K562 (cell line): ENCODE measurements at regions of chr22 and their contacts with region 1.

Region 1: GRCh38 chr22:41091132-41092022 is 1.0 kb upstream of the EP300 start:
- DNase-seq: peak; percentile 94 to 96 (median 96)
- ATAC-seq: peak; percentile 89
- H3K4me3 ChIP-seq: peak overlapping the region; percentile 68
- H3K27ac ChIP-seq: peak overlapping the region; percentile 99
- H3K4me1 ChIP-seq: peaks cover 6 to 7% of the 10 kb centered on the region in 2 experiments; a peak in 4 of 5 replicates
- H3K27me3 ChIP-seq: no peaks in the 10 kb centered on the region
- CTCF ChIP-seq: no peak
- EP300 ChIP-seq: no peak
- POLR2A ChIP-seq: peak; percentile 90
- RAD21 ChIP-seq: no peak

Region 2: DNA sequence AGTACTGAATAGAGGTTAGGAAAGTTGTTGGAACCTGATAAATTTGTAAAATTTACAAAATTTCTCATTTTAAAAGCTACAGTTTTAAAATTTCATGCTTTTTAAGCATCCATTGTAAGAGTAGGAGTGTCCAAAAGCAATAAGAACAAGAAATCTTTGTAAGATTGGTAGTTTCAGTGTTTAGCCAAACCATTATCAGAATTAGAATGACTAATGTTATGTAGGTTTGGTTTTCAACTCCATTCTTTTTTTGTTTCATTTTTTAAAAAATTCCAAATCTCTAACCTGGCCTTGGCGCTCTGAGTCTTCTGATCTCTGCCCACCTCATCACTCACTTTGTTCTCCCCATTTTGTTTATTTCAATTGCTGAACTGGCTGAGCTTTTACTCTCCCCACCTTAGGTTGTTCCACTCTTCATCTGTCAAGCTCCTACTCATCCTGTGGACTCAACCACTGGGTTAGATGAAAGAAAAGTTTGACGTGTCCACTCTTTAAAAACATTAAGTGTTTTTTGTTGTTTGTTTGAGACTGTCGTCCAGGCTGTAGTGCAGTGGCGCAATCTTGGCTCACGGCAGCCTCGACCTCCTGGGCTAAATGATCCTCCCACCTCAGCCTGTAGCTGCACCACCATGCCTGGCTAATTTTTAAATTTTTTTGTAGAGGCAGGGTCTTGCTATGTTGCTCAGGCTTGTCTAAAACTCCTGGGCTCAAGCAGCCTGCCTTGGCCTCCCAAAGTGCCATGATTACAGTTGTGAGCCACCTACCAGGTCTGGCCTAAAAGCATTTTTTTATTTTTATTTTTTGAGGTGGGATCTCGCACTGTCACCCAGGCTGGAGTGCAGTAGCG is 15.0 kb after region 1 on chr22:
- CTCF ChIA-PET with region 1: no interaction called
- POLR2A ChIA-PET with region 1: interaction called, 10 read pairs
- in situ Hi-C with region 1: no loop called
- intact Hi-C with region 1: no loop called
- DNase-seq: no peak
- ATAC-seq: peak; percentile 20; the same call in 1 of the 3 replicates
- H3K4me3 ChIP-seq: no peak overlapping the region
- H3K27ac ChIP-seq: no peak overlapping the region
- H3K4me1 ChIP-seq: no peaks in the 10 kb centered on the region
- H3K27me3 ChIP-seq: no peaks in the 10 kb centered on the region
- CTCF ChIP-seq: no peak
- EP300 ChIP-seq: no peak
- POLR2A ChIP-seq: no peak
- RAD21 ChIP-seq: no peak